GM18951 (cell line): ENCODE measurements at regions of chr11 and their contacts with region 1.

Region 1: GRCh38 chr11:12963792-12964536 is 45.2 kb upstream of the RASSF10 start:
- POLR2A ChIP-seq: no peak

Region 2: GRCh38 chr11:13052130-13052605 is 88.2 kb after region 1 on chr11:
- in situ Hi-C with region 1: no loop called
- POLR2A ChIP-seq: no peak

Region 3: DNA sequence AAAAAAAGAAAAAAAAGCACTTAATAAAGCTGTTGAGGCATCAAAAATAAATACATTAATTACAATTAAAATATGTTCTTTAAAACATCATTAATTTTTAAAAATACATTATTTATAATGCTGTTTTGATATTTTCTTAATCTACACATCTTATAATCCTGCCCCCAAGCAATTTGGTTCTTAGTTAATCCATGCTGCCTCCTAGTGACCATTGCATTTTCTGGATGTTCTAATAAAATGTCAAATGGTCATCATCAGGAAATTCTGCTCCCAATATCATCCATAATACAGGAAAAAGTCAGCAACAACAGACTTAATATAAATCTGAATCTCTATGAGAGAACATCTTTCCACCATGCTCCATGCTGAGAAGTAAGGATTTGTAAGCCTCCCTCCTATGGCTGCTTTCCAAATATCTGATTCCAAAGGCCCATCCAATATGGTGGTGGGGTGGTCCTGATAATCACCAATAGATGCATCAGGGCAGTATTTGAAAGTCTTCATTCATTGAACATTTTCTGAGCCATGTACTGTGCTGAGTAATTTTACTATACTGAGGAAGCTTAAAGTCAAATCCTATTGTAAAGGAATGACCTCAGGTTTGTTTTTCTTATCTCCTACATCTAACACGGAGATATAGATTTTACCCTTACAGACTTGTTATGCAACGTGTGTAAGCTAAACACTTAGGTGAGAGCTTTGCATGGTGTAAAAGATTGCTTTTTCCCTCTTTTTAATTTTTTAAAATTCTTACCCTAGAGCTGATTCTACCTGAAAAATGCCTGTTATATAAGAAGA is 189.0 kb after region 1 on chr11:
- in situ Hi-C with region 1: loop called (anchors 10 kb)
- POLR2A ChIP-seq: no peak

Region 4: GRCh38 chr11:13343931-13344717 is 380.2 kb after region 1 on chr11:
- in situ Hi-C with region 1: loop called (anchors 25 kb)
- POLR2A ChIP-seq: no peak